ENCODE measurements at regions of chr10 and their contacts with region 1.

Region 1: DNA sequence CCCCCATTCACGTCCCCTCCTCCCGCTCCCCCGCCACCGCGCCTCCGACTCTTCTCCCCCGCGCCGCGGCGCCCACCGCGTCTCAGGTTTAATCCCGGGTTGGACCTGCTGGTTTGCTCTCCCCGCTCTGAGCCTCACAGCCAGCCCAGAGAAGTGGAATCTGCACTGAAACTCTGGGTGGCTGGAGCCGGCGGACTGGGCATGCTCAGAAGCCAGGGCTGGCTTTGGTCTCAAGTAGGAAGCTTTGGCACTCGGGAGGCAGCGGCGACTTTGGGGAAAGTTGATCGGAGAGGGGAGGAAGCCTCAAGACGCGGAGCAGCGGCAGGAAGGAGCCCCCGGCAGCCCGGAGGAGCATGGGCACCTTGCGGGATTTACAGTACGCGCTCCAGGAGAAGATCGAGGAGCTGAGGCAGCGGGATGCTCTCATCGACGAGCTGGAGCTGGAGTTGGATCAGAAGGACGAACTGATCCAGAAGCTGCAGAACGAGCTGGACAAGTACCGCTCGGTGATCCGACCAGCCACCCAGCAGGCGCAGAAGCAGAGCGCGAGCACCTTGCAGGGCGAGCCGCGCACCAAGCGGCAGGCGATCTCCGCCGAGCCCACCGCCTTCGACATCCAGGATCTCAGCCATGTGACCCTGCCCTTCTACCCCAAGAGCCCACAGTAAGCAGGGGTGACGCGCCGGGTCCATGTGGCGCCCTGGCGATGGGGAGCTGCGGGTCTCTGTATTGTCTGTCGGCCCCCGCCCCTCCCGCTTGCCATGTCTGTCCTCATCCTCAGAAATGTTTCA is at the start of gene PRKG1:
- DNase-seq: peak; percentile 70 to 80
- ATAC-seq: peak; percentile 86 to 95 (median 90)
- H3K4me3 ChIP-seq: peak within 1 kb of the TSS; percentile 57 to 82 (median 66)
- H3K27ac ChIP-seq: peak within 1 kb of the TSS; percentile 73 to 90 (median 84)
- H3K4me1 ChIP-seq: peaks cover 0 to 35% (median 11%) of the 10 kb centered on the region in 9 donors
- H3K27me3 ChIP-seq: peaks cover 0 to 42% (median 0%) of the 10 kb centered on the region in 7 donors
- CTCF ChIP-seq: no peak
- total RNA-seq, gene PRKG1: 25.2 to 48.1 (median 32.1) TPM

Region 2: GRCh38 chr10:50470345-50470744 is 604.1 kb before region 1 on chr10:
- intact Hi-C with region 1: no loop called
- DNase-seq: no peak
- ATAC-seq: no peak
- H3K4me3 ChIP-seq: no peak overlapping the region
- H3K27ac ChIP-seq: peak overlapping the region in 3 of 10 donors; percentile 24 to 46 (median 31)
- H3K4me1 ChIP-seq: peaks cover 0 to 59% (median 51%) of the 10 kb centered on the region in 9 donors
- H3K27me3 ChIP-seq: no peaks in the 10 kb centered on the region
- CTCF ChIP-seq: no peak

Region 3: GRCh38 chr10:51145375-51145774 is 70.9 kb after region 1 on chr10:
- intact Hi-C with region 1: loop called in 1 of 10 experiments (anchors 5 kb)
- DNase-seq: no peak
- ATAC-seq: peak in 7 of 8 donors; percentile 25 to 75 (median 60)
- H3K4me3 ChIP-seq: no peak overlapping the region
- H3K27ac ChIP-seq: peak overlapping the region in 8 of 10 donors; percentile 27 to 63 (median 48)
- H3K4me1 ChIP-seq: peaks cover 0 to 60% (median 18%) of the 10 kb centered on the region in 9 donors
- H3K27me3 ChIP-seq: no peaks in the 10 kb centered on the region
- CTCF ChIP-seq: no peak

Region 4: DNA sequence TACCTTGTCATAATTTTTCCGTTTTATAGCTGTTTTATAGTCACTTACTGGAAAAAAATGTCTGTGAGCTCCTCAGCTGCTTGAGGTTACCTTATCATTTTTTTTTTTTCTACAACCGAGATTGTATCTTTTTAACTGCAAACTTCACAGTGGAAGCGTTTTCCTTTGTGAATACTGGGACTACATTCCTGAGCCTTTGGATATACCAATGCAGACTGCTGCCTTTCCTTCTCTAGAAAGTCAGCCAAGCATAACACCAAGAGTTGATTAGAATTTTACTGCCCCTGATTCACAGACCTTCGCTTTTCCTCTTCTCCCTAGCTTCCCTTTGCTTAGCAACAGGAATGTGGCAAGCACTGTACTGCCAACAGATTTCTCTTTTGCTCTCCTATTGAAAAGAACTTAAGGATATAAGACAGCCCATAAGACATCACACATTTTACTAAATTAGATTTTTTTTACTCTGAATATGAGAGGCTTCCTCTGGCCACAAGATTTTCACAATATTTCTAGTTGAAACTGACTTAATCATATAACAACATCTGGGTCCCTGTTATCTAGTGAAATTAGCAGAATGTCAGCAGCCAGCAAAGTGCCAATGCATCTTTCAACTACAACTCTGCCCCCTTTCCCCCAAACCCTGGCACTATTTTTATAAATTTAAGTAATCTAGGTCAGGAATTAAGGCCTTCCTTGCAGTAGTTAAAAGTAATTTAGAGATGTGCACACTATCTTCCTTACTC is 170.5 kb after region 1 on chr10:
- intact Hi-C with region 1: loop called in 2 of 10 experiments (anchors 5 to 10 kb)
- DNase-seq: peak in 1 of 2 donors; percentile 18
- ATAC-seq: peak; percentile 65 to 90 (median 81)
- H3K4me3 ChIP-seq: peak overlapping the region in 5 of 10 donors; percentile 8 to 18 (median 11)
- H3K27ac ChIP-seq: peak overlapping the region in 9 of 10 donors; percentile 13 to 80 (median 59)
- H3K4me1 ChIP-seq: peaks cover 0 to 62% (median 28%) of the 10 kb centered on the region in 9 donors
- H3K27me3 ChIP-seq: no peaks in the 10 kb centered on the region
- CTCF ChIP-seq: no peak

Region 5: DNA sequence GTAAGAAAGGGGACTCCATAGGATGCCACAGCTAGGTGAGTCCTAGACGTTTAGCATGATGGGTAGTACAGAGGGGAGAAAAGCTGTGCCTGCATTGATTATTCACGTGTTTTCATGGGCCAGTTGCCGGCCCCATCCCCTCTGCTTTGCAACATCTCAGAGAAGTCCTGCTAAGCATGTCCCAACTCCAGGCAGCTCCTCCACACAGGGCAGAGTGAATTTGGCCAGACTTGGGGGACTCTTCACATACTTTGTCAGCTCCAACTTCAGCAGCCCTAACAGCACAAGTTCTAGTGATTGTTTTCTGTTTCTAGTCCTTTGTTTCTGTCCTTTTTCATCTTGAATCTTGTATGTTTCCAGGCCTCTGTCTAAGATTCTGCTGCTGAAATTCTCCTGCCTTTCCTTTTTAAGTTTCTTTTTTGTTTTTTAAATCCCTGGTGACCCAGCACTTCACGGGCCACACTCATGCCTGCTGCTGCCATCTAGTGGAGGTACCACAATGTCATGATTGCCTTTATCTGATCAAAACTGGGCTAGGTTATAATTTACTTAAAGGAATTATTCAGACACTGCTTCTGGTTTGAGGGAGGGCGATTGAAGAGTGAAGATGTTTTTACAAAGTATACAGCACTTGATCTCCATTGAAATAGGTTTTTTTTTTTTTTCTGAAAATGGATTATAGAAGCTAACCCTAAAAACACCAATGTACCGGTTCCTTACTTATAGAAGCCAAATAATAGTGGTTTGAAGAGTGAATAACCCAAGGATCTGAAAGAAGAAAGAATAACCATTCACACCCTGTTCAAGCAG is 348.1 kb after region 1 on chr10:
- intact Hi-C with region 1: loop called in 6 of 10 experiments (anchors 2 to 10 kb)
- DNase-seq: peak; percentile 24 to 75
- ATAC-seq: peak; percentile 53 to 82 (median 66)
- H3K4me3 ChIP-seq: peak overlapping the region in 1 of 10 donors; percentile 8
- H3K27ac ChIP-seq: peak overlapping the region; percentile 19 to 87 (median 72)
- H3K4me1 ChIP-seq: peaks cover 0 to 52% (median 20%) of the 10 kb centered on the region in 9 donors
- H3K27me3 ChIP-seq: no peaks in the 10 kb centered on the region
- CTCF ChIP-seq: peak; percentile 61 to 81 (median 75)

Region 6: GRCh38 chr10:51960494-51960895 is 886.1 kb after region 1 on chr10:
- intact Hi-C with region 1: loop called in 6 of 10 experiments (anchors 5 to 10 kb)
- DNase-seq: peak in 1 of 2 donors; percentile 15
- ATAC-seq: peak in 7 of 8 donors; percentile 39 to 69 (median 59)
- H3K4me3 ChIP-seq: no peak overlapping the region
- H3K27ac ChIP-seq: no peak overlapping the region
- H3K4me1 ChIP-seq: peaks cover 0 to 24% (median 4%) of the 10 kb centered on the region in 9 donors
- H3K27me3 ChIP-seq: no peaks in the 10 kb centered on the region
- CTCF ChIP-seq: peak; percentile 17 to 69 (median 51)

Measured in heart right ventricle (tissue), 16 donors.